Ascending aorta (tissue), 2 donors: ENCODE measurements at regions of chr1 and their contacts with region 1.

Region 1: DNA sequence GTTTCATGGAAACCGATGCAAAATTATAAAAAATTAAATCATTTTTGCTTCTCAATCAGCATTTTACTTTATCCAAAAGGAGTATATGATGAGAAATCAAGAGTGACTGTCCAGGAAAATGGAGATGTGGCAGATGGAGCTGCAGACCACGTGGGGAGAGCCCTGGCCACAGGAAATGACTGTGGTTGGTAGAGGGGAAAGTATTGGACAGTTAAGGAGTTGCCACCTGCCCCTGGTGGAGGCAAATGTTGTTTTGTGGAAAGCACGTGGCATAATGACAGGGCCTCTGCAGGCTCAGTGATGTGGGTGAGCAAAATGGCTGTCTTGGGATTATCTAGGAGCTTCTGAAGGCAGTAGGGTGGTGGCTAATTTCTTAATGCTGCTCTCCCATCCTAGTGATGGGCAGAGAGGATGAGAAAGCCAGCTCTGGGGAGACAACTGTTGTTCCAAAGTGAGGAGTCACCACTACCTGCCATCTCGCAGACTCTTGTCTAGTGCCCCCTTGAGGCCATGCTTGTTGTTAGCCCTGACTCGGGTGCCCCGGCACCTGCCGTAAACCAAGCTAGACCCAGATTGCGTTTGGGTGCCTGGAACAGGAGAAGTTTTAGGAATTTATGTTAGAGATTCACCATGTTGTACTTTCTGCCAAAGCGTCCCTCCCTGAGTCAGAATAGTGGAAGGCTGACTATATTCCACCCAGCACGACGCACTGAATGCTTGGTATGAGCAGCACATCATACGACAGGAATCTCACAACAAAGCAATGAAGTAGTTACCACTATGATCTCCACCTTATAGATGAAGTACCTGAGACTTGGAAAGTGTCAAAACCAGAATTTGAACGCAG is 144.0 kb downstream of the ROR1 start:
- DNase-seq: peak in 1 of 2 donors; percentile 74
- H3K4me3 ChIP-seq: peak overlapping the region in 1 of 2 donors; percentile 32
- H3K27ac ChIP-seq: peak overlapping the region; percentile 72 to 85
- H3K4me1 ChIP-seq: peaks cover 2 to 44% of the 10 kb centered on the region in 2 donors
- H3K27me3 ChIP-seq: no peaks in the 10 kb centered on the region
- CTCF ChIP-seq: peak in 2 of 3 experiments; percentile 7 to 37

Region 2: DNA sequence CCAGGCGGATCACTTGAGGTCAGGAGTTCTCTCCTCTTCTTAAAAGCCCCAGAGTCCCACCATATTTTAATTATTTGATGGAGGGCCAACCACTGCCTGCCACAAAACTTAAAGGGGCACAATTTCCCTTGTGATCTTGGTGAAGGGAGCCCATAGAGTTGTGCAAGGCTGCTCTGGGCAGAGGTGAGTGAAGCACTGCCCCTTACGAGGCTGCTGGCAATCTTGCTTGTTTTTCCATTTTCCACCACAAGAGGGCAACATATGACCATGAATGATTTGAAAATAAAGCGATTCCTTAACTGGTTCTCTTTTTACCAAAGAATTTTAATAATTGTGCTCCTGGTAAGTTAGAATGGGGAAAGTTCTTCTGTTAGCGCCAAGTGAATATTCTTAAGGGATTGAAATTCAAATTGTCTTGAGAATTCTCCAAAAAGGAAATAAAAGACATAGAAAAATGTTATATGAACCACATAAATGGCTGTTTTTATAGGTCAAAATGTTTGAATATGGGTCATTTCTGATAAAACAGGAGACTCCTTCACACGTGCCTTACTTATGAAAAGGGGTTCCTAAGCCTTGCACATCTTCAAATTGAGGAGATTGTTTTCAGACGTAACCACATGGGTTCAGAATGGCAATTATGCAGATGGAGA is 301.9 kb before region 1 on chr1:
- intact Hi-C with region 1: loop called (anchors 5 kb)
- DNase-seq: peak in 1 of 2 donors; percentile 87
- H3K4me3 ChIP-seq: no peak overlapping the region
- H3K27ac ChIP-seq: no peak overlapping the region
- H3K4me1 ChIP-seq: peaks cover 0 to 13% of the 10 kb centered on the region in 2 donors
- H3K27me3 ChIP-seq: no peaks in the 10 kb centered on the region
- CTCF ChIP-seq: peak; percentile 67 to 85 (median 77)

Region 3: DNA sequence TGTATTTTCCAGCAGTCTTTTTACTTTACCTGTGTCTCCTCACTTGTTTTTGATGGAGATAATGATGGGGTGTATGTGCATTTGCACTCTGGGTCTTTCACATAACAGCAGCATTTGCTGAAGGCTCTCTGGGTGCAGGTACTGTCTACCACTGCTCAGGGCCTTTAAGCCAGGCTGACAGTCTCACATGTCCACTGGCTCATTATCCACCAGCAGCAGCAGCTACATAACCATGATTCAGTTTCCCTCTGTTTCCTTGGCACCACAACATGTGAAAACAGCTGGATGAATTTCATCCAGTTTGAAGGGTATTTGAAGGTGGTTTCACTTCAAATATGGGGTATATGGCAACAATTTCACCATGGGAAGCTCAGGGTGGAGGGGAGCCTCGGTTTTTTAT is 185.1 kb before region 1 on chr1:
- intact Hi-C with region 1: no loop called
- DNase-seq: no peak
- H3K4me3 ChIP-seq: no peak overlapping the region
- H3K27ac ChIP-seq: peak overlapping the region in 1 of 2 donors; percentile 31
- H3K4me1 ChIP-seq: peaks cover 0 to 4% of the 10 kb centered on the region in 2 donors
- H3K27me3 ChIP-seq: no peaks in the 10 kb centered on the region
- CTCF ChIP-seq: no peak

Region 4: GRCh38 chr1:63868268-63868781 is 49.5 kb before region 1 on chr1:
- intact Hi-C with region 1: no loop called
- DNase-seq: no peak
- H3K4me3 ChIP-seq: no peak overlapping the region
- H3K27ac ChIP-seq: no peak overlapping the region
- H3K4me1 ChIP-seq: peaks cover 0 to 31% of the 10 kb centered on the region in 2 donors
- H3K27me3 ChIP-seq: no peaks in the 10 kb centered on the region
- CTCF ChIP-seq: no peak

Region 5: GRCh38 chr1:64136752-64137411 is 219.1 kb after region 1 on chr1:
- intact Hi-C with region 1: loop called (anchors 2 kb)
- DNase-seq: peak; percentile 23 to 90
- H3K4me3 ChIP-seq: no peak overlapping the region
- H3K27ac ChIP-seq: peak overlapping the region; percentile 37 to 64
- H3K4me1 ChIP-seq: peaks cover 4 to 42% of the 10 kb centered on the region in 2 donors
- H3K27me3 ChIP-seq: no peaks in the 10 kb centered on the region
- CTCF ChIP-seq: peak; percentile 83 to 90 (median 88)